ENCODE measurements at regions of chr6 and their contacts with region 1.

Region 1: GRCh38 chr6:14743465-14744211 is 502.2 kb upstream of the JARID2 start:
- DNase-seq: peak; percentile 73
- H3K4me3 Mint-ChIP-seq: peak overlapping the region; percentile 61
- H3K27ac Mint-ChIP-seq: peak overlapping the region; percentile 100
- H3K4me1 Mint-ChIP-seq: peaks cover 79% of the 10 kb centered on the region
- H3K27me3 Mint-ChIP-seq: no peaks in the 10 kb centered on the region

Region 2: GRCh38 chr6:14354919-14355572 is 388.6 kb before region 1 on chr6:
- intact Hi-C with region 1: no loop called
- DNase-seq: no peak
- H3K4me3 Mint-ChIP-seq: no peak overlapping the region
- H3K27ac Mint-ChIP-seq: peak overlapping the region; percentile 54
- H3K4me1 Mint-ChIP-seq: peaks cover 28% of the 10 kb centered on the region
- H3K27me3 Mint-ChIP-seq: no peaks in the 10 kb centered on the region

Region 3: GRCh38 chr6:14638906-14639761 is 104.5 kb before region 1 on chr6:
- intact Hi-C with region 1: no loop called
- DNase-seq: no peak
- H3K4me3 Mint-ChIP-seq: no peak overlapping the region
- H3K27ac Mint-ChIP-seq: no peak overlapping the region
- H3K4me1 Mint-ChIP-seq: peaks cover 74% of the 10 kb centered on the region
- H3K27me3 Mint-ChIP-seq: peaks cover 3% of the 10 kb centered on the region

Region 4: DNA sequence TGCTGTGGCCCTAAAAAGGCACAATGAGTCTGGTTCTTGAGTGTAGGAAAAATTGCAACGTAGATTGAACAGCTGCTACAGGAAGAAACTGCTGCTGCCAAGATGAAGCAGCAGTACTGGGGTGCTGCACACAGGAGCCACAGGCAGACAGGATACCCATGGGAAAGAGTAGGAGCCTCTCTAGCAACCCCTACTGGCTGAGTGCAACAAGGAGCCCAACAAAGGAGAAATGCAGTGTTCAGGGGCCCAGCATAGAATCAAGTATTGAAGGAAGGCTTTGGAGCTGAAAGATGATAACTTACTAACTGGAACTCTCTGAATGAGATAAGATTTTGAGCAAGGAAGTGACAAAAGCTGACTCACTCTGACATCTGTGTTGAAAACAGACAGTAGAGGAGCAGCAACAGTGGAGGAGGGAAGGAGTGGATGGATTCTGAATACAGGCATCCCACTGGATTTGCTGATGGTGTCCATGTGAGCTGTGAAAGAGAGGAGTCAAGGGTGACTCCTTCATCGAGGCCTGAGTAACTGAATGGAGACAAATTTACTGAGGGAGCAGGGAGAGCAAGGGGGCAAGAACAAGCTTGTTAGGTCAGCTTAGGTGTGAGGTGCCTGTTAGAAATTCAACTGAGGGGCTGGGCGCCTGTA is 32.5 kb before region 1 on chr6:
- intact Hi-C with region 1: loop called (anchors 1 kb)
- DNase-seq: peak; percentile 63
- H3K4me3 Mint-ChIP-seq: peak overlapping the region; percentile 75
- H3K27ac Mint-ChIP-seq: peak overlapping the region; percentile 99
- H3K4me1 Mint-ChIP-seq: peaks cover 60% of the 10 kb centered on the region
- H3K27me3 Mint-ChIP-seq: no peaks in the 10 kb centered on the region

Region 5: GRCh38 chr6:14816116-14816859 is 72.7 kb after region 1 on chr6:
- intact Hi-C with region 1: loop called (anchors 1 kb)
- DNase-seq: no peak
- H3K4me3 Mint-ChIP-seq: no peak overlapping the region
- H3K27ac Mint-ChIP-seq: no peak overlapping the region
- H3K4me1 Mint-ChIP-seq: peaks cover 17% of the 10 kb centered on the region
- H3K27me3 Mint-ChIP-seq: no peaks in the 10 kb centered on the region

Region 6: GRCh38 chr6:15132854-15133670 is 389.4 kb after region 1 on chr6:
- intact Hi-C with region 1: loop called (anchors 5 kb)
- DNase-seq: no peak
- H3K4me3 Mint-ChIP-seq: no peak overlapping the region
- H3K27ac Mint-ChIP-seq: no peak overlapping the region
- H3K4me1 Mint-ChIP-seq: peaks cover 33% of the 10 kb centered on the region
- H3K27me3 Mint-ChIP-seq: no peaks in the 10 kb centered on the region

Region 7: GRCh38 chr6:15628499-15629131 is 885.0 kb after region 1 on chr6:
- intact Hi-C with region 1: loop called (anchors 5 kb)
- DNase-seq: no peak
- H3K4me3 Mint-ChIP-seq: peak overlapping the region; percentile 24
- H3K27ac Mint-ChIP-seq: no peak overlapping the region
- H3K4me1 Mint-ChIP-seq: peaks cover 57% of the 10 kb centered on the region
- H3K27me3 Mint-ChIP-seq: no peaks in the 10 kb centered on the region

Measured in activated T-helper 2 cell treated with anti-CD3 and anti-CD28 coated beads, Interferon-gamma antibody, Interleukin-2, Interleukin-4, amounts not matched to agents 10 μg/mL and 5 μg/mL and 100 μg/mL, durations not matched to agents 14 hours and 24 hours and 36 hours (primary cell).